Esophagus squamous epithelium (tissue), 5 donors: ENCODE measurements at regions of chr6 and their contacts with region 1.

Region 1: GRCh38 chr6:129726650-129727049 is 16.7 kb upstream of the ARHGAP18 start:
- DNase-seq: no peak
- H3K4me3 ChIP-seq: no peak overlapping the region
- H3K27ac ChIP-seq: no peak overlapping the region
- H3K4me1 ChIP-seq: no peaks in the 10 kb centered on the region
- H3K27me3 ChIP-seq: no peaks in the 10 kb centered on the region
- CTCF ChIP-seq: no peak
- POLR2A ChIP-seq: no peak

Region 2: DNA sequence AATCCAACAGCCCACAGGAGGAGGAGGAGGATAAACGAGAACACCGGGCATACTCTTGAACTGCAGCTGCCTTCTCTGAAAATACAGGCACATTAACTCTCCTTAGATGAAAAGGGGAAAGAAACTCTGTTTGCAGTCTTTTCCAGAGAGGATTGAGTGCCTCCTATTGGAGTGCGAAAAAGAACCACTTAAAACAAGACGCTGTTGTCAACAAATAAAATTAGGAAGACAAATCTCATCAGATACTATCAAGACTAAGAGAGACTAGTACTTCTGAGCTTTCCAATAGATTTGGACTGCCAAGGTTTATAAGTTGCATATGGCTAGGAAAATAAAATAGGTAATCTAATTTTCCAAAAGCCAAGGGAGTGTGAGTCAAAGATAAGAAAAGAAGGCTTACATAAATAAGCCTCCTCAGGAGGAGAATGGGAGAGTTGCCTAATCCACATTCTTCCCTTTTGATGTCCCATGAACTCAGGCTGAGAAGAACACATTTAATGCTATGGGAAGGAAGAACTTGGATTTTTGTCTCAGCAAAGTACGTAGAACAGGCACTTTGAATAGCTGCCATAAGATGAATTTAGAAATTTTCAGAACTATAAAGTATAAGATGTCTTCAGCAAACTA is 171.3 kb before region 1 on chr6:
- intact Hi-C with region 1: no loop called
- DNase-seq: no peak
- H3K4me3 ChIP-seq: no peak overlapping the region
- H3K27ac ChIP-seq: no peak overlapping the region
- H3K4me1 ChIP-seq: no peaks in the 10 kb centered on the region
- H3K27me3 ChIP-seq: no peaks in the 10 kb centered on the region
- CTCF ChIP-seq: no peak
- POLR2A ChIP-seq: no peak

Region 3: DNA sequence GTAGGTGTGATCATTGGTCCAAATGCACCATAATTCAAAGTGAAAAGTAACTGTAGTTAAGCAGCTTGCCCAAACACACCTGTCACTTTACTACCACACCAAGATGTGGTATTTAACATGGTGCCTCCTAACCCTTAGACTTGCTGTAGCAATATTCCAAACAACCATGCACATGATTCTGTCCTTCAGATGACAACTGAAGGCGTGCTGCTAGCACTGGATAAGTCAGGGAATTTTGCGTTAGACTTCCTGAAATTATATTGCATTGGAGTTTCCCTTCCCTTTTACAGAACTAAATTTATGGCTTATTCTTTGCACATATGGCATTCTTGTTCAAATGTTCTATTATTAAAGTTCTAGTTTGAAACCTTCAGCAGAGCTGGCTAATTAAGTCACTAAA is 122.9 kb before region 1 on chr6:
- intact Hi-C with region 1: loop called (anchors 5 kb)
- DNase-seq: no peak
- H3K4me3 ChIP-seq: no peak overlapping the region
- H3K27ac ChIP-seq: no peak overlapping the region
- H3K4me1 ChIP-seq: no peaks in the 10 kb centered on the region
- H3K27me3 ChIP-seq: no peaks in the 10 kb centered on the region
- CTCF ChIP-seq: no peak
- POLR2A ChIP-seq: no peak

Region 4: DNA sequence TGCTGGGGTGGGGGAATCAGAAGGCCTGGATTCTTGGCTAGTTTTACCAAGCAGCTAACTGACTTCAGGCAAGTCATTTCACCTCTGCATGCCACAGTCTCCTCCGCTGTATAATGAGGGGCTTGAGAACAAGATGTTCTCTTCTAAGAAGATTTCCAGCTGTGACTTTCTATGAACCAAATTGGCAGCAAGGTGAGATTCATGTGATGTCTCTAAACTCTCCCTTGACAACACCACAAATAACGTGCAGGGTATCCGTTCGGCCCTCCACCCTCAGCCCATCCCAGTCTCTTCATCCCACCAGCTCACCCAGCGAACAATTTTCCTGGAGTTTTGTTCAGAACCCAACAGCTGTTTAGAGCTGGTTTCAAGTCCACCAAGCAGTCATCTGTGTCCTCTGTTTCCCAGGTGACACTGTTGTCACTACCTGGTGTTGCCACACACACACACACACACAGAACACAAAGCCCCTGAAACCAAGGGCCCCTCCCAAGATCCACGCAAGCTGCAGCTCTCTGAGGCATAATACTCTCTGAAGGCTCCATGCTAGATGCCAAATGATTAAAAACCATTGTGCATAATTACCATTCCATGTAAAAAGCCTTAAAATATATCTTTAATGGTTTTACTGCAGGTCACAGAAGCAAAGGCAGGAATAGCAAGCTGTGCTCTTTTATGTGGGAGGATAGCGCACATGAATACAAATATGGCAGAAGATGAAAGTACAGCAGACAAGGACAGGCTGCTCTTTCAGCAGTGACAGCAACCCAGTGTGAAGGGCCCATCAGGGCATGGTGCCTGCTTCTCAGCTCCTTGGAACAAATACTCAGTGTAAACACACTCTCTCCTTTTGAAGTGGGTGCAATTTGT is 64.9 kb before region 1 on chr6:
- intact Hi-C with region 1: no loop called
- DNase-seq: no peak
- H3K4me3 ChIP-seq: no peak overlapping the region
- H3K27ac ChIP-seq: peak overlapping the region in 1 of 4 donors; percentile 59
- H3K4me1 ChIP-seq: peaks cover 0 to 10% (median 0%) of the 10 kb centered on the region in 3 donors
- H3K27me3 ChIP-seq: no peaks in the 10 kb centered on the region
- CTCF ChIP-seq: no peak
- POLR2A ChIP-seq: no peak